ENCODE measurements at regions of chr15 and their contacts with region 1.

Region 1: GRCh38 chr15:96330450-96331145 is at the start of gene NR2F2:
- DNase-seq: peak; percentile 90 to 97
- H3K4me3 ChIP-seq: peak within 1 kb of the TSS; percentile 95
- H3K27ac ChIP-seq: peak within 1 kb of the TSS; percentile 91
- H3K4me1 ChIP-seq: peaks cover 0 to 13% of the 10 kb centered on the region in 2 donors
- H3K27me3 ChIP-seq: no peaks in the 10 kb centered on the region
- CTCF ChIP-seq: no peak
- total RNA-seq, gene NR2F2: 126 TPM

Region 2: DNA sequence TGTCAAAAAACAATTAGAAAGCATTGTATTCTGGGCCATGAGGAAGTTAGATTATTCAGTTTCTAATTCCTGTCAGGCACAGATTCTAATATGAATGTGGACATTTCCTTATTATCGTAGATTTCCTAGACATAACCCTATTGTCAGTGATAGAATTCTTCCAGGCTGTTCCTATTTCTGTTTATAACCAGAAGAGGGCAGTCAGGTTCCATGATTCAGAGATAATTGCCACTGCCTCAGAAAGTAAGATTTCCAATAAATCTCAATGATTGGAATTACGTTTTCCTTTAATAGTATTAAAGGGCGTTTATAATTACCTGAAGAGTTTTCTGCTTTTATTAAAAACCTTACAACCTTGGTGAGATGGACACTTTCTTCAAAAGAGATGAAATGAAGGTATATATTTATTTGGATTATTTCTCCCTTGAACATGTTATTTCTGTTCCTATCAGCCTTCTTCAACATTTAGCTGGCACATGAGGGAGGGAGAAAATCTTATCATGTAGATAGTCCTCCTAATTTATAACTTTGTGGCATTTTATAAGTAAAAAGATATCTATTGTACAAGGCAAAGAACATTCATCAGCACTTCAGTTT is 1660.1 kb before region 1 on chr15:
- intact Hi-C with region 1: loop called (anchors 5 kb)
- DNase-seq: no peak
- H3K4me3 ChIP-seq: no peak overlapping the region
- H3K27ac ChIP-seq: peak overlapping the region in 1 of 2 donors; percentile 23
- H3K4me1 ChIP-seq: no peaks in the 10 kb centered on the region
- H3K27me3 ChIP-seq: no peaks in the 10 kb centered on the region
- CTCF ChIP-seq: peak; percentile 46 to 74 (median 73)

Region 3: GRCh38 chr15:95409626-95410310 is 920.8 kb before region 1 on chr15:
- intact Hi-C with region 1: loop called (anchors 10 kb)
- DNase-seq: no peak
- H3K4me3 ChIP-seq: no peak overlapping the region
- H3K27ac ChIP-seq: peak overlapping the region in 1 of 2 donors; percentile 39
- H3K4me1 ChIP-seq: peaks cover 0 to 33% of the 10 kb centered on the region in 2 donors
- H3K27me3 ChIP-seq: no peaks in the 10 kb centered on the region
- CTCF ChIP-seq: no peak

Region 4: DNA sequence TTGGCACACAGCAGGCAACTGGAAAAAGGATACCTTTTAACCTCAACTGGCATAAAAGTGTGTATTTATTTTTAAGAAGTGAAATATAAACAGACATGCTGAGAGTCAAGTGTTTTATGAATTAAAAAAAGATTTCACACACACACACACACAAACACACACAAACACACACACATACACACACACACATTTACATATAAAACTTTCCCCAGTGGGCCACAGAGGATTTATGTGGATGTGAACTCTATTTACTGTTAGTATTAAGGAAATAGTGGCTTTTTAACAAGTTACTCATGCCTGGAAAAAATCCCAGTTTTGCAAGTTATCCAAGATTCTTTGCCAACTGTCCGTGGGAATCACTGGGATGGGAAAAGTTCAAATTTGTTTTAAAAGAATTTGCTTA is 726.0 kb before region 1 on chr15:
- intact Hi-C with region 1: loop called (anchors 5 kb)
- DNase-seq: peak in 1 of 2 donors; percentile 64
- H3K4me3 ChIP-seq: no peak overlapping the region
- H3K27ac ChIP-seq: peak overlapping the region in 1 of 2 donors; percentile 46
- H3K4me1 ChIP-seq: peaks cover 0 to 18% of the 10 kb centered on the region in 2 donors
- H3K27me3 ChIP-seq: no peaks in the 10 kb centered on the region
- CTCF ChIP-seq: no peak

Region 5: DNA sequence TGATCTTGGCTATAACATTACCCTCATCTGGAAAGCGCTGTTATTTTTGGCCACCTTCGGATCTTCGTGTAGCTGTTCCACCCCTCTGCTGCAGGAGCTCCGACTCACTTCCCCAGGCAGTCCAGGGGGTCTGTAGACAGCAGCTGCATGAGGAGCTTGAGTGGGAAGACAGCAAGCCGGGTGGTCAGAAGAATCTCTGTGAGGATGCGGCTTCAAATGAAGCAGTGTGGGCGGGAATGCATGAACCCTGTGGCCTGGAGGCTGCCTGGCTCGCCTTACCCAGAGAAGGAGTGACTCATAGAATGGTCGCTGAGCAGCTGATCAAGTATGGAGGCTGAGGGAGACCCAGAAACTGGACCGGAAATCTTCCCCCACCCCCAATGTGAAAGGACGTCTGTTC is 45.3 kb before region 1 on chr15:
- intact Hi-C with region 1: no loop called
- DNase-seq: no peak
- H3K4me3 ChIP-seq: no peak overlapping the region
- H3K27ac ChIP-seq: no peak overlapping the region
- H3K4me1 ChIP-seq: no peaks in the 10 kb centered on the region
- H3K27me3 ChIP-seq: no peaks in the 10 kb centered on the region
- CTCF ChIP-seq: no peak

Region 6: DNA sequence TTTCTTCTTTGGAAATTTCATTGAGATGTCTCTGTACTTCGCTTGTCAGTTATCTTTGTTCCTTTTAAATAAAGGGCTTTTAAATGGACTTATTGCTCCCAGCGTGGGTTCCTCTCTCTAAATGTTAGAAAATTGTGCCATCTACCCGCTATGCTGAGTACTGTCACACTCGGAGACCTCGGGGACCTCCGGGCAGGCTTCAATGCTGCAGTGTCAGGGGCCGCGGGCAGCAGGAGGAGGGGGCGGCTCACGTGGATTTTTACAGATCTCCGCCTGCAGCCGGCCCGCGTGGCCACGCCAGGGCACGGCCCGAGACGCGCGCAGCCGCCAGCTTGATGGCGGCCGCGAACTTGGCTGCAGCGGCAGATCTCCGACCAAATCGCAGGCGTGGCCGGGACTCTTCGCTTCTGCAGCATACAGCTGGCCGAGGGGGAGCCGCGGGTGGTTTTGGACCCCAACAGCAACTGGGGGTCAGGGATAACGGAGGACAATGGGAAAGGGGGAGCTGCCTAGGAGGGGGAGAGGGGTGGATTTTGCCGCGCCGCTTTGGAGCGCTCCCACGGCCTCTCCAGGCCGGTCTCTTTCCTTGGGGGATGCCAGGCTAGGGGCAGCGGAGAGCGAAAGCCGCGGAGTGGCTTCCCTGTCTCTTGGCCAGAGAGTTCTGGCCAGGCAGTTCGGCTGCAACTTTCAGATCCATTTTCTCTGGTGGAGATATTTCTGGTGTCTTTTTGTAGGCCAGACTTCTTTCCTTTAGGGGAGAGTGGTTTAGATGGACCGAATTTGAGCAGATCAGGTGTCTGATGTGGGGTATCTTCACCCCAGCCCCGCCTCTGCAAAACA is 15.2 kb after region 1 on chr15:
- intact Hi-C with region 1: loop called (anchors 2 kb)
- DNase-seq: peak in 1 of 2 donors; percentile 84
- H3K4me3 ChIP-seq: peak overlapping the region; percentile 60 to 89
- H3K27ac ChIP-seq: peak overlapping the region; percentile 85 to 91
- H3K4me1 ChIP-seq: peaks cover 0 to 6% of the 10 kb centered on the region in 2 donors
- H3K27me3 ChIP-seq: no peaks in the 10 kb centered on the region
- CTCF ChIP-seq: peak; percentile 63 to 73 (median 71)

Measured in ascending aorta (tissue), 2 donors.